Ascending aorta (tissue), 2 donors: ENCODE measurements at regions of chr1 and their contacts with region 1.

Region 1: DNA sequence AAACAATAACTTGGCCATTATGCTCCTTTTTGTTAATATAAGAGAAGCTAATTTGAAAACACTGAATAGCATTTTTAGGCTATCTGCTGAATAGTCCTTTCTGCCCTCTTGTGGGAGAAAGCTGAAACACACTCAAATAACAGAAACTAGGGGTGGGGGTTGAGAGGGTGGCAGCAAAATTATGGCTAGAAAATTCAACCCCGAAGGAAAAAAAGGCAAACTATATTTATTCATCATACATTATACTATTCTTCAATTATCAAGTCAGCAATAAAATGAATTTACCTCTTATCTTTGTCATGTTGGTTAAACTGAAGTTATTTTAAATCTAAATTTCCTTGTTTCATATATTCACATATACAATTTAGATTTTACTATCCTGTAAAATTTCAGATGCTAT is 255.9 kb downstream of the FAF1 start:
- DNase-seq: no peak
- H3K4me3 ChIP-seq: no peak overlapping the region
- H3K27ac ChIP-seq: no peak overlapping the region
- H3K4me1 ChIP-seq: peaks cover 0 to 2% of the 10 kb centered on the region in 2 donors
- H3K27me3 ChIP-seq: no peaks in the 10 kb centered on the region
- CTCF ChIP-seq: peak in 2 of 3 experiments; percentile 60 to 70

Region 2: DNA sequence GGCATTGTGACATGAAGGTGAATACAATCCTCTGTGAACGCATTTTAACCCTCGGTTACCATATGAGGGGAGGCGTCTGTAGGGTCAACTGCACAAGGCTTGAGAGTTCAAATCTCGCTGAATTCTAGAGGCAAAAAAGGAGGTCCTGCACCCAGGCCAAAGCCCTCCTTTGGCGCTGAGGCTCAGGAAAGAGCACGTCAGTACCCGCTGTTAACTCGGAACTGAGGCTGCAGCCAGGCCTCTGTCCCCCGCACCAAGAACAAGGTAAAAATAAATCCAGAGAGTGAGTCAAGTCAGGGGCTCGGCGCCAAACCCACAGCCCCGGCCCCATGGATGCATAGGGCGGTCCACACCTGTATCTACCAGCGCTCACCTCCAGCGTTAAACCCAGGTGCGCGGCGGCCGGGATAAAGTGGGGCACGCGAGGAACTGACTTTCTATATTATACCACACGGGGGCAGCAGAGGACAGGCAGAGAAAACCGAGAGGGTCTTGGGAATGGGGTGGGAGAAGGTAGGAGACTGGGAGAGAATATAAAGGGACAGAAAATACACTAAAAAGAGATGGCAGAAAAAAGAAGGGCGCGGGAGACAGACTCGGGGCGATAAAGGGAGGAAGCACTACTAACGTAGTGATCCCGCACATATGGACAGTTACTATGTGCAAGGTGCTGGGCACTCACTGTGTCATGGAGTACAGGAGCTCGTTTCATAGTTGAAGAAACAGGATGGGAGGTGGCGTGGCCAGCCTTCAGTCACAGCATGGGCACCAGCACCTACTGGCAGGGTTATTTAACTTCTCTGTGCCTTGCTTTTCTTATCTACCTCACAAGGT is 335.7 kb before region 1 on chr1:
- intact Hi-C with region 1: loop called (anchors 5 kb)
- DNase-seq: no peak
- H3K4me3 ChIP-seq: no peak overlapping the region
- H3K27ac ChIP-seq: no peak overlapping the region
- H3K4me1 ChIP-seq: peaks cover 0 to 2% of the 10 kb centered on the region in 2 donors
- H3K27me3 ChIP-seq: no peaks in the 10 kb centered on the region
- CTCF ChIP-seq: peak; percentile 44 to 82 (median 46)